Mammary epithelial cell (primary cell): ENCODE measurements at regions of chr19 and their contacts with region 1.

Region 1: DNA sequence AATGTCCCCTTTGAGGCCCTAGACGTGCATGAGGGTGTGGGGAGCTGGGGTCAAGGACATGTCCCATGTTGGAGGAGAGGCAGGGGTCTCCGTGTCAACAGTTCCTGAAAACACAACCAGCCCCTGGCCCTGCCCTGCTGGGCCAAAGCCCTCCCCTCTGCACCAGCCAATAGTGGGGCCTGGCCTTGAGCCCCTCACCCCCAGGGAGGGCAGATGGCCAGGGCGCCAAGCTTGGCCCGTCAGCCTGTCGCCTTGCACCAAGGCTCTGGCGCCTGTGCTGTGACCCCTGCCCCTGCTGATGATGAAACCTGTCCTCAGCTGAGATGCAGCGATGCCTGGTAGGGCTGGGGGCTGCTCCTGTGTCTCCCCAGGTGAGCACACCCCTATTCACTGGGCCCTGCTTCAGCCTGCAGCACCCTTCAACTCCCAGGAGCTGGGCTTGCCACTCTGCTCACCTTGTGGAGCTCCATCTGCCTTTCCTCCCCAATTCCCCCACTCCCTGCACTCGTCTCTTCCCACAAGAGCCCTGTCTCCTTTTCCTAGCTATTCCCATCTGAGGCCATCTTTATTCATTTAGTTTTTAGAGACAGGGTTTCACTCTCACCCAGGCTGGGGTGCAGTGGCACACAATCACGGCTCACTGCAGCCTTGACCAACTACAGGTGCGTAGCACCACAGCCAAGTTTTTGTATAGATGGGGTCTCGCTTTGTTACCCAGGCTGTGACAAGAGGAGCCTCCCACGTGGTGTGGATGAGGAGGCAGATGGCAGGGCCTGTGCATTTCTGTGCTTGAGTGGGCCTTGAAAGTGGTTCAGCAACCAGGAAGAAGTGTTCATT is 2.1 kb upstream of the HAMP start:
- DNase-seq: no peak
- H3K4me3 ChIP-seq: no peak overlapping the region
- H3K27ac ChIP-seq: no peak overlapping the region
- H3K4me1 ChIP-seq: no peaks in the 10 kb centered on the region
- H3K27me3 ChIP-seq: no peaks in the 10 kb centered on the region
- CTCF ChIP-seq: no peak

Region 2: GRCh38 chr19:35195830-35196229 is 84.4 kb before region 1 on chr19:
- CTCF ChIA-PET with region 1: no interaction called
- dilution Hi-C with region 1: loop called (anchors 5 kb)
- in situ Hi-C with region 1: no loop called
- intact Hi-C with region 1: no loop called
- DNase-seq: no peak
- H3K4me3 ChIP-seq: no peak overlapping the region
- H3K27ac ChIP-seq: no peak overlapping the region
- H3K4me1 ChIP-seq: no peaks in the 10 kb centered on the region
- H3K27me3 ChIP-seq: peaks cover 3% of the 10 kb centered on the region
- CTCF ChIP-seq: no peak

Region 3: GRCh38 chr19:35856546-35857149 is 576.4 kb after region 1 on chr19 and contains the start of gene KIRREL2:
- CTCF ChIA-PET with region 1: no interaction called
- dilution Hi-C with region 1: loop called (anchors 10 kb)
- in situ Hi-C with region 1: no loop called
- intact Hi-C with region 1: no loop called
- DNase-seq: no peak
- H3K4me3 ChIP-seq: peak within 1 kb of the TSS; percentile 44 to 50 (median 47)
- H3K27ac ChIP-seq: no peak within 1 kb of the TSS
- H3K4me1 ChIP-seq: peaks cover 8% of the 10 kb centered on the region
- H3K27me3 ChIP-seq: peaks cover 15% of the 10 kb centered on the region
- CTCF ChIP-seq: no peak
- total RNA-seq, gene KIRREL2: not detected